IMR-90 (cell line): ENCODE measurements at regions of chr12 and their contacts with region 1.

Region 1: GRCh38 chr12:70719672-70720420 is 82.6 kb upstream of the PTPRB start:
- DNase-seq: peak; percentile 36
- ATAC-seq: peak; percentile 85
- H3K4me3 ChIP-seq: peak overlapping the region; percentile 52
- H3K27ac ChIP-seq: no peak overlapping the region
- H3K4me1 ChIP-seq: no peaks in the 10 kb centered on the region
- H3K27me3 ChIP-seq: no peaks in the 10 kb centered on the region
- CTCF ChIP-seq: peak; percentile 91
- POLR2A ChIP-seq: no peak
- RAD21 ChIP-seq: peak; percentile 93

Region 2: GRCh38 chr12:69779928-69780327 is 939.9 kb before region 1 on chr12:
- CTCF ChIA-PET with region 1: no interaction called
- POLR2A ChIA-PET with region 1: no interaction called
- dilution Hi-C with region 1: no loop called
- in situ Hi-C with region 1: no loop called
- intact Hi-C with region 1: loop called (anchors 10 kb)
- DNase-seq: peak; percentile 10
- ATAC-seq: peak; percentile 66
- H3K4me3 ChIP-seq: no peak overlapping the region
- H3K27ac ChIP-seq: no peak overlapping the region
- H3K4me1 ChIP-seq: no peaks in the 10 kb centered on the region
- H3K27me3 ChIP-seq: no peaks in the 10 kb centered on the region
- CTCF ChIP-seq: peak; percentile 41
- POLR2A ChIP-seq: no peak
- RAD21 ChIP-seq: peak; percentile 47

Region 3: DNA sequence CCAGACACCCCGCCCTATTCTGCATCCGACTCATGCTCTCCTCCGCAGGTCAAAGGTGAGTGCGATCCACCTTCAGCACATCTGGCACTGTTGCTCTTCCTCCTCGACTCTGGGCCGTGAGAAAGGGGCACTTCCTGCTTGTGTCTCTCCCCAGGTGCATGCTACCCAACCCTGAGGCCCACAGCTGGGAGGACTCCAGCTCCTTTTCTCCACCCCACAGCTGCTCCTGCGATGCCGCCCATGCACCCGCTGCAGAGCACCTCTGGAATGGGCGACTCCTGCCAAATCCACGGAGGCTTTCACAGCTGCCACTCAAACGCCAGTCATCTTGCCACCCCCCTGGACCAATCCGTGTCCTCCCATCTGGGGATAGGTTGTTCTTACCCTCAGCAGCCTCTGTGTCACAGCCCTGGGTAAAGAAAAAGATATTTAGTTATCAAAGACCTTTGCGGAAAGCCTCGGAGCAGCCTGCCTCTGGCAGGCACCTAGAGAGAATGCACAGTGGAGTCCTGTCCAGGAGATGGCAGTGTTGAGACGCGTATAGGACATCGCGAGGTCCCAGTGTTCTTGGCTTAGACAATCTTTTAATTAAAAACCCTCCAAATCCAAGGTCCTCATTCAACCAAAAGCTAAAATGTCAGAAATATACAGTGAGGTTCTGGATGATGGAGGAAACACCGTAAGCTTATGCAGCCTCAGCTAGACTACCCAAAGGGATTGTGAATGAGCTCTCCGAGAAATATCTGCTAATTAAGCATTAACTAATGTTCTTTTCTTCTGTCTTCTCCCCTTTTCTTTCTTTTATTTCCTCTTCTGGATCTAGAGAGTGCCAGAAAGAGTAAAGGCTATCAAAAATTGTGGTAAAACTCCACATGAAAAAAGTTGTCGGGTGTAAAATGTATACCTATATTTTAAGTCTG is 840.5 kb before region 1 on chr12:
- CTCF ChIA-PET with region 1: interaction called, 3 read pairs
- POLR2A ChIA-PET with region 1: no interaction called
- dilution Hi-C with region 1: no loop called
- in situ Hi-C with region 1: no loop called
- intact Hi-C with region 1: loop called (anchors 2 kb)
- DNase-seq: peak; percentile 69
- ATAC-seq: peak; percentile 97
- H3K4me3 ChIP-seq: no peak overlapping the region
- H3K27ac ChIP-seq: no peak overlapping the region
- H3K4me1 ChIP-seq: no peaks in the 10 kb centered on the region
- H3K27me3 ChIP-seq: peaks cover 7% of the 10 kb centered on the region; the same call in 1 of the 2 replicates
- CTCF ChIP-seq: peak; percentile 93
- POLR2A ChIP-seq: no peak
- RAD21 ChIP-seq: peak; percentile 96